HCT116 (cell line): ENCODE measurements at regions of chr12 and their contacts with region 1.

Region 1: GRCh38 chr12:4526923-4527546 is 11.7 kb upstream of the RAD51AP1 start:
- DNase-seq: no peak
- ATAC-seq: no peak
- H3K4me3 ChIP-seq: no peak overlapping the region
- H3K27ac ChIP-seq: no peak overlapping the region
- H3K4me1 ChIP-seq: no peaks in the 10 kb centered on the region
- H3K27me3 ChIP-seq: no peaks in the 10 kb centered on the region
- CTCF ChIP-seq: peak; percentile 18 to 49 (median 43); a peak in 4 of 6 replicates
- POLR2A ChIP-seq: no peak
- RAD21 ChIP-seq: peak; percentile 32; the same call in 1 of the 2 replicates

Region 2: DNA sequence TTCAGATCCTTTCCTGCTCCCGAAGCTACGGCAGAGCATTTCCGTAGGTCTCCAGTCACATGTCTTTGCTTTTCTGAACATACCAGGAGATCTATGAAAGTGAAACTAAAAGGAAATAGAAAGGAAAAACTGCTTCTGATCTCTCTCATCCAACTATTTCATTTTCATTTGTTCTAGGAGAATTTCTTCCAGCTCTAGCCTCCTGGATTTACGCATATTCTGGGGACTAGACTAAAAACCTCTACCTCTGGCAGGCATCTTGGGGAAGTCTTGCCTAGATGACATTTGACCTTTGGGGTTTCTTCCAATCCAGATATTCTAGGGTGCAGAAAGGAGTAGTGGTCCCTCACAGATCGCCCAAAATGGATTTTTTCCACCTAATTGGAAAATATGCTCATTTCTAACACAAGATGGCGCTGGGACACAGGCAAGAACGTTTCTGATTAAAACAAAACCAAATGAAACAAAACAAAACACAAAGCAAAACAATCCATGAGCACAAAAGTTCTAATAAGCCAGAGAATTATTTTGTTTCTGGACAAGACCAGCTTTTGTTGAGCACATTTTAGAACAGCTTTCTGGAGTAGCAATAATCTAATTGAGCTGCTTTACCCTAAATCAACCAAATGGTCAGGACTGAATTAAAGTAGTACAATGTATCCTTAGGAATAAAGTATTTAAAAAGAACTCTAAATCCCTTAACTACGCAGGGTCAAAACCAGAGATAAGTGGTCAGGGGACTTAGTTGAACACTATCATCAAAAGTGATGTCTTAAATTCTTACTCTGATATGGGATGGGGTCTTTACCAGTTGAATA is 641.5 kb before region 1 on chr12:
- CTCF ChIA-PET with region 1: no interaction called
- POLR2A ChIA-PET with region 1: no interaction called
- RAD21 ChIA-PET with region 1: no interaction called
- intact Hi-C with region 1: loop called (anchors 10 kb)
- DNase-seq: peak; percentile 8
- ATAC-seq: no peak
- H3K4me3 ChIP-seq: no peak overlapping the region
- H3K27ac ChIP-seq: no peak overlapping the region
- H3K4me1 ChIP-seq: no peaks in the 10 kb centered on the region
- H3K27me3 ChIP-seq: peaks cover 33% of the 10 kb centered on the region
- CTCF ChIP-seq: peak; percentile 40 to 84 (median 71); a peak in 5 of 6 replicates
- POLR2A ChIP-seq: no peak
- RAD21 ChIP-seq: peak; percentile 74

Region 3: GRCh38 chr12:4307593-4308333 is 219.3 kb before region 1 on chr12:
- CTCF ChIA-PET with region 1: no interaction called
- POLR2A ChIA-PET with region 1: no interaction called
- RAD21 ChIA-PET with region 1: no interaction called
- intact Hi-C with region 1: loop called (anchors 1 kb)
- DNase-seq: peak; percentile 77
- ATAC-seq: peak; percentile 97
- H3K4me3 ChIP-seq: peak overlapping the region; percentile 15 to 39
- H3K27ac ChIP-seq: peak overlapping the region; percentile 39; the same call in 1 of the 2 replicates
- H3K4me1 ChIP-seq: peaks cover 8 to 19% of the 10 kb centered on the region in 2 experiments
- H3K27me3 ChIP-seq: peaks cover 20% of the 10 kb centered on the region
- CTCF ChIP-seq: peak; percentile 72 to 83 (median 79)
- POLR2A ChIP-seq: no peak
- RAD21 ChIP-seq: peak; percentile 83

Region 4: DNA sequence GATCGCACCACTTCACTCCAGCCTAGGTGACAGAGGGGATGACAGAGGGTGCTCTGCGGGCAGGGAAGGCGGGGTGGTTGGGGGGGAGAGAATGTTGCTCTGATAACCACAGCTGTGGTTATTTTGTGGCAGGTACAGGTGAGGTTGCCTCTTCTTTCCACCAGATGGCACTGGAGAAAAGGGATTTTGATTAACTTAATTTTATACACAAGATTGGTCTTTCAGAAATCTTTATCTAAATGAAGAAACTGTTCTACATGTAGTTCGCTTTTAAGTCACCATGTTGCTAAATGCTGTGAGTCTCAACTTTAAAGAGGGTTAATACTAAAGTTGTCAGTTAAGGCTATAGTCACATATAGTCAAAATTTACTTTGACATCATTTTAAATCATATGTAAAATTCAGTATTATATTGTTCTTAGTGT is 173.2 kb before region 1 on chr12:
- CTCF ChIA-PET with region 1: interaction called, 3 read pairs
- POLR2A ChIA-PET with region 1: no interaction called
- RAD21 ChIA-PET with region 1: no interaction called
- intact Hi-C with region 1: loop called (anchors 2 kb)
- DNase-seq: no peak
- ATAC-seq: peak; percentile 73; the same call in 1 of the 2 replicates
- H3K4me3 ChIP-seq: no peak overlapping the region
- H3K27ac ChIP-seq: no peak overlapping the region
- H3K4me1 ChIP-seq: no peaks in the 10 kb centered on the region
- H3K27me3 ChIP-seq: no peaks in the 10 kb centered on the region
- CTCF ChIP-seq: peak in 2 of 3 experiments; percentile 59 to 62; a peak in 4 of 6 replicates
- POLR2A ChIP-seq: no peak
- RAD21 ChIP-seq: peak; percentile 50

Region 5: DNA sequence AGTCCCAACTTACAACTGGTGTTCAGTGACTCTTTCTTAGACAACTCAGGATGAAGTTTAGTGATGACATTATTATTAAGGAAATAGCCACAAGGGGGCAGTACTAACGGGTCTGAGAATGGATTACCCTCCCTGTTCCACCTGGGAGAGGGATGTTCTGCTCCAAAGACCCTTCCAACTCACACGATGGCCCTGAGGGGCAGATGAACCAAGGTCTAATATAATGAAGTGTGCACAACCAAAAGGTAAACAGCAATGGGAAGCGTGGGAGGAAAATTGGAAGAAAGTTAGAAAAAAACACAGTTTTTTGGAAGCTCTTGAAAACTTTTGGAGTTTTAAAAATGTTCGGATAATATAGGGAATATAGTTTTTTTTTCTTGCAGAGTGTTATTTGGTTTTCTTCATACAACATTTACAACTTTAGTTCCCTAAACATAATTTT is 105.4 kb before region 1 on chr12:
- CTCF ChIA-PET with region 1: interaction called, 3 read pairs
- POLR2A ChIA-PET with region 1: no interaction called
- RAD21 ChIA-PET with region 1: no interaction called
- intact Hi-C with region 1: loop called (anchors 1 kb)
- DNase-seq: peak; percentile 27
- ATAC-seq: peak; percentile 82
- H3K4me3 ChIP-seq: no peak overlapping the region
- H3K27ac ChIP-seq: no peak overlapping the region
- H3K4me1 ChIP-seq: no peaks in the 10 kb centered on the region
- H3K27me3 ChIP-seq: peaks cover 21% of the 10 kb centered on the region
- CTCF ChIP-seq: peak; percentile 43 to 76 (median 48); a peak in 5 of 6 replicates
- POLR2A ChIP-seq: no peak
- RAD21 ChIP-seq: peak; percentile 45